ENCODE measurements at regions of chr2 and their contacts with region 1.

Region 1: GRCh38 chr2:677056-677965 is at the start of gene TMEM18:
- DNase-seq: peak; percentile 99
- ATAC-seq: peak; percentile 71
- H3K4me3 Mint-ChIP-seq: peak within 1 kb of the TSS; percentile 91
- H3K27ac Mint-ChIP-seq: peak within 1 kb of the TSS; percentile 96
- H3K4me1 Mint-ChIP-seq: peaks cover 60% of the 10 kb centered on the region
- H3K27me3 Mint-ChIP-seq: no peaks in the 10 kb centered on the region
- CTCF ChIP-seq: no peak
- total RNA-seq, gene TMEM18: 30.8 and 34.6 TPM in 2 replicates

Region 2: DNA sequence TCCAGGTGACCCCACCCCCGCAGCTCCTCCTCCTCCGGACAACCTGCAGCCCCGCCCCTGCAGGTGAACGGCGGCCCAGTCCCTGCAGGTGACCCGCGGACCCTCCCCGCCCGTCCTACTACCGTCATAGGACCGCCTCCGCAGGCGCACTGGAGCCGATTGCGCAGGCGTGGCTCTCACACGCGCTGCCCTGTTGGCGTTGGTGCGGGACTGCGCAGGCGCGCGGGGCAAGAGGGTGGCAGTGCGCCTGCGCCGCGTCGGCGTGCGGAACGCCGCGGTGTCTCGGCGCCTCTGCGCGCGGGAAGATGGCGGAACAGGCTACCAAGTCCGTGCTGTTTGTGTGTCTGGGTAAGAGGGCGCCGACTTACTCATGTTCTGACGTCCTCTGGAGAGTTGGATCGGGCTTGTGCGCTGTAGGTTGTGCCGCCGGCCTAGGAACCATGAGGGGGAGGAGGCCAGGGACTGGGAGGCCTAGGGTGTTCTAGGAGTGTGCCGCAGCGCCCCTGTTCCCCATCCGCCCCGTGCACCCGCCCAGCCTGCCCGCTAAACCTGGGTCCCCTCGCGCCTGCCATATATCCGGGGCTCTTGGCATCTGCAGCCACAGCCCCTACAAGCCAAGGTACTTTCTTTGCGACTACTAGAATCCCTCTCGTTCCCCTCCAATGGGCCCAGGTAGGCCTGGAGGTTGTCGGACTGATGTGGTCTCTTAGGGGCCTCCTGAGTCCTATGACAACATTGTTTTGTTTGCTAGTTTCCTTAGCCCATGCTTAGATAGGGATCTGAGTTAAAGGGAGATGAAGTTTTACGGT is 412.4 kb before region 1 on chr2 and contains the start of gene ACP1:
- CTCF ChIA-PET with region 1: no interaction called
- POLR2A ChIA-PET with region 1: no interaction called
- intact Hi-C with region 1: loop called (anchors 1 kb)
- DNase-seq: peak; percentile 95
- ATAC-seq: peak; percentile 85
- H3K4me3 Mint-ChIP-seq: peak within 1 kb of the TSS; percentile 93
- H3K27ac Mint-ChIP-seq: peak within 1 kb of the TSS; percentile 93
- H3K4me1 Mint-ChIP-seq: peaks cover 50% of the 10 kb centered on the region
- H3K27me3 Mint-ChIP-seq: no peaks in the 10 kb centered on the region
- CTCF ChIP-seq: no peak
- total RNA-seq, gene ACP1: 80.1 and 81.8 TPM in 2 replicates

Region 3: DNA sequence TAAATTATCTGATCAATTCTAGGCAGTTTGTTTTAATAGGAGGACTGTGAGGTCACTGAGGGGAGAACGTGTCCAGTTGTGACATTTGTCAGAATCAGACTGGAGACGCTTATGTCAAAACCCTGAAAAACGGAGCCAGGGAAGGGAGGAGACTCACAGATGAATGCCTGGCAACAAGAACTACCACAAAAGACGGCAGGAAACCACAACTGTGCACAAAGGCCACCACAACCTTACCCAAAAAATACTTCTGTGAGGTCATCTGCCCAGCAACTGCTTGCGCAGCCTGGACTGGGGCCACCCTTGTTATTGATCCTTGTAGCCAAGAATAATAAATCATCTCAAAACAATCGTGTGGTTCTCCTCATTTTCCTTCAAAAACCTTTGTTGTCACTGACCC is 216.4 kb before region 1 on chr2:
- CTCF ChIA-PET with region 1: no interaction called
- POLR2A ChIA-PET with region 1: no interaction called
- intact Hi-C with region 1: loop called (anchors 1 kb)
- DNase-seq: no peak
- ATAC-seq: peak; percentile 80
- H3K4me3 Mint-ChIP-seq: peak overlapping the region; percentile 66
- H3K27ac Mint-ChIP-seq: peak overlapping the region; percentile 90
- H3K4me1 Mint-ChIP-seq: peaks cover 77% of the 10 kb centered on the region
- H3K27me3 Mint-ChIP-seq: no peaks in the 10 kb centered on the region
- CTCF ChIP-seq: no peak

Region 4: DNA sequence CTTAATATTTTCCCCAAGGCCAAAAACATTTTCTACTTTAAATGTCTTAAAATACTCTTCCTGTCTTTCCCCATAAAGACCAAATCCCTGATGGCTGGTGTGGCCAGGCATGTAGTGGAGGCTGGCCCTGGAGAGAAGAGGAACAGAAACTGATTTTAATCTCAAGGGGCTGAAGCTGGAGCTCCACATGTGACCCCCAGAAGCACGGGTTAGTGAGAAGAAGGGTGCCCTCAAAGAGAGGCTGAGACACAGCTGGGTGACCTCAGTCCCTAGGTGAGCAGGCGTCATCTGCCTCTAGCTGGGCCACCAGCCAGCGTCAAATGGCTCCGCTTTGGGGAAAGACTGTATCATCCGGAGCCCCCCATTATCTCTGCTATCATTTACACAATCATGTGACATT is 19.2 kb after region 1 on chr2:
- CTCF ChIA-PET with region 1: no interaction called
- POLR2A ChIA-PET with region 1: interaction called, 11 read pairs
- intact Hi-C with region 1: loop called (anchors 1 kb)
- DNase-seq: no peak
- ATAC-seq: peak; percentile 100
- H3K4me3 Mint-ChIP-seq: peak overlapping the region; percentile 3
- H3K27ac Mint-ChIP-seq: peak overlapping the region; percentile 59
- H3K4me1 Mint-ChIP-seq: peaks cover 20% of the 10 kb centered on the region
- H3K27me3 Mint-ChIP-seq: no peaks in the 10 kb centered on the region
- CTCF ChIP-seq: no peak

Region 5: GRCh38 chr2:2613279-2614199 is 1936.2 kb after region 1 on chr2:
- CTCF ChIA-PET with region 1: no interaction called
- POLR2A ChIA-PET with region 1: no interaction called
- intact Hi-C with region 1: loop called (anchors 5 kb)
- DNase-seq: peak; percentile 46
- ATAC-seq: peak; percentile 99
- H3K4me3 Mint-ChIP-seq: peak overlapping the region; percentile 79
- H3K27ac Mint-ChIP-seq: peak overlapping the region; percentile 8
- H3K4me1 Mint-ChIP-seq: peaks cover 5% of the 10 kb centered on the region
- H3K27me3 Mint-ChIP-seq: peaks cover 8% of the 10 kb centered on the region
- CTCF ChIP-seq: no peak

Measured in activated B cell treated with CpG ODN at 0.5 μM for 24 hours (primary cell).